ENCODE measurements at regions of chr16 and their contacts with region 1.

Region 1: DNA sequence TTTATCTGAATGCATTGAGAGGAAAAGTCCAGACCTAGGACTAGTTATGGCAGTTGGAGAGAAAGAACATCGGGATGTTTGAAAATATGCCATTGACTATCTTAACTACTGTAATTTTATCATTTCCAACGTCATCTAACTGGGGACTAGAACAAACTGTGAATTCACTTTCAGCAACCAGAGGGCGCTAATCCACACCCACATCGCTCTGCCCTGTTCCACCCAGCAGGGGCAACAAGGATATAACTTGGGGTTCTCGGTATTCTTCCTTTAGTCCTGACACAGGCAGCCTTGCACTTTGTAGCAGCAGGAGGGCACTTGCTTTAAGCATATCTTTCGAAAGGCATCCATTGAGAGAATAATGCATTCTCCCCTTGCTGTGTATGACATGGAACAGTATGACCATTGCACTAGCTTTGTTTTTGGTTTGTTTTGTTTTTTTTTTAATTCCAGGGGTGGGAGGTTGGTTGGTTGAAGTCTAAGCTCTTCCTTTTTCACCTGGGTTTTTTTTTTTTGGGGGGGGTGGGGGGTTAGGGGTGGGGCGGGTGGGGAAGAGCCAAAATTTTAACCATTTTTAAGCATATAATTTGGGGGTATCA is 31.5 kb downstream of the SIAH1 start:
- DNase-seq: peak; percentile 84
- ATAC-seq: peak; percentile 94
- H3K4me3 ChIP-seq: no peak overlapping the region
- H3K4me3 Mint-ChIP-seq: no peak overlapping the region
- H3K27ac ChIP-seq: no peak overlapping the region
- H3K27ac Mint-ChIP-seq: peak overlapping the region; percentile 57
- H3K4me1 ChIP-seq: peaks cover 4 to 5% of the 10 kb centered on the region in 2 donors
- H3K4me1 Mint-ChIP-seq: peaks cover 28% of the 10 kb centered on the region
- H3K27me3 ChIP-seq: no peaks in the 10 kb centered on the region
- H3K27me3 Mint-ChIP-seq: no peaks in the 10 kb centered on the region
- CTCF ChIP-seq: peak; percentile 85

Region 2: DNA sequence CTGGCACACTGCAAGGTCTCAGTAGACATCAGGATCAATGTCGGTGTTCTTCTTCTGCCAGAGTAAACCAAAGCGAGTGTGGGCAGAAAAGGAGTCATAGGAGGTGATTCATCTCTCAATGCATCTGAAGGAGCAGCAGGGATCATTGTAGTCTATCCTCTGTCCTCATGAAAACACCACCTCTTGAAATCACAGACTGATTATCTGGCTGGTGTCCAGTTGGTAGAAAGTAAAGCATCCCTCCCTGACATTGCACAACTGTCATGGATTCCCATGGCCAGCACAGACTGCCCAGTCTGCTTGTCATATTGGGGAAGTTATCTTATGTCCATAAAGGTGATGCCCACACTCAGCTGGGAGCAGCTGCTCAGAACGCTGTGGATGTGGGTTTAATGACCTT is 272.0 kb before region 1 on chr16:
- CTCF ChIA-PET with region 1: no interaction called
- POLR2A ChIA-PET with region 1: no interaction called
- intact Hi-C with region 1: no loop called
- DNase-seq: no peak
- ATAC-seq: no peak
- H3K4me3 ChIP-seq: no peak overlapping the region
- H3K4me3 Mint-ChIP-seq: no peak overlapping the region
- H3K27ac ChIP-seq: no peak overlapping the region
- H3K27ac Mint-ChIP-seq: no peak overlapping the region
- H3K4me1 ChIP-seq: no peaks in the 10 kb centered on the region
- H3K4me1 Mint-ChIP-seq: no peaks in the 10 kb centered on the region
- H3K27me3 ChIP-seq: peaks cover 0 to 6% (median 0%) of the 10 kb centered on the region in 4 experiments
- H3K27me3 Mint-ChIP-seq: peaks cover 29% of the 10 kb centered on the region
- CTCF ChIP-seq: no peak

Region 3: GRCh38 chr16:48335951-48336350 is 17.7 kb before region 1 on chr16:
- CTCF ChIA-PET with region 1: interaction called, 4 read pairs
- POLR2A ChIA-PET with region 1: interaction called, 11 read pairs
- intact Hi-C with region 1: no loop called
- DNase-seq: no peak
- ATAC-seq: no peak
- H3K4me3 ChIP-seq: no peak overlapping the region
- H3K4me3 Mint-ChIP-seq: no peak overlapping the region
- H3K27ac ChIP-seq: no peak overlapping the region
- H3K27ac Mint-ChIP-seq: no peak overlapping the region
- H3K4me1 ChIP-seq: no peaks in the 10 kb centered on the region
- H3K4me1 Mint-ChIP-seq: no peaks in the 10 kb centered on the region
- H3K27me3 ChIP-seq: no peaks in the 10 kb centered on the region
- H3K27me3 Mint-ChIP-seq: no peaks in the 10 kb centered on the region
- CTCF ChIP-seq: no peak

Region 4: GRCh38 chr16:48385272-48386150 is 31.8 kb after region 1 on chr16 and contains the start of gene SIAH1:
- CTCF ChIA-PET with region 1: interaction called, 6 read pairs
- POLR2A ChIA-PET with region 1: interaction called, 3 read pairs
- intact Hi-C with region 1: loop called (anchors 1 kb)
- DNase-seq: peak; percentile 94
- ATAC-seq: peak; percentile 81
- H3K4me3 ChIP-seq: peak within 1 kb of the TSS; percentile 66 to 95 (median 93)
- H3K4me3 Mint-ChIP-seq: peak within 1 kb of the TSS; percentile 93
- H3K27ac ChIP-seq: peak within 1 kb of the TSS; percentile 69 to 88
- H3K27ac Mint-ChIP-seq: peak within 1 kb of the TSS; percentile 92
- H3K4me1 ChIP-seq: peaks cover 17 to 23% of the 10 kb centered on the region in 2 donors
- H3K4me1 Mint-ChIP-seq: peaks cover 25% of the 10 kb centered on the region
- H3K27me3 ChIP-seq: no peaks in the 10 kb centered on the region
- H3K27me3 Mint-ChIP-seq: no peaks in the 10 kb centered on the region
- CTCF ChIP-seq: no peak
- total RNA-seq, gene SIAH1: 47.6 and 54.7 TPM in 2 replicates

Region 5: GRCh38 chr16:48526058-48526957 is 172.6 kb after region 1 on chr16:
- CTCF ChIA-PET with region 1: interaction called, 144 read pairs
- POLR2A ChIA-PET with region 1: interaction called, 8 read pairs
- intact Hi-C with region 1: loop called (anchors 1 kb)
- DNase-seq: peak; percentile 61
- ATAC-seq: peak; percentile 80
- H3K4me3 ChIP-seq: no peak overlapping the region
- H3K4me3 Mint-ChIP-seq: no peak overlapping the region
- H3K27ac ChIP-seq: no peak overlapping the region
- H3K27ac Mint-ChIP-seq: peak overlapping the region; percentile 26
- H3K4me1 ChIP-seq: peaks cover 0 to 13% of the 10 kb centered on the region in 2 donors
- H3K4me1 Mint-ChIP-seq: peaks cover 18% of the 10 kb centered on the region
- H3K27me3 ChIP-seq: no peaks in the 10 kb centered on the region
- H3K27me3 Mint-ChIP-seq: no peaks in the 10 kb centered on the region
- CTCF ChIP-seq: peak; percentile 38

Region 6: GRCh38 chr16:48623304-48624016 is 269.8 kb after region 1 on chr16:
- CTCF ChIA-PET with region 1: interaction called, 73 read pairs
- POLR2A ChIA-PET with region 1: interaction called, 20 read pairs
- intact Hi-C with region 1: loop called (anchors 1 kb)
- DNase-seq: peak; percentile 83
- ATAC-seq: peak; percentile 98
- H3K4me3 ChIP-seq: peak overlapping the region; percentile 39 to 62 (median 59)
- H3K4me3 Mint-ChIP-seq: peak overlapping the region; percentile 85
- H3K27ac ChIP-seq: no peak overlapping the region
- H3K27ac Mint-ChIP-seq: no peak overlapping the region
- H3K4me1 ChIP-seq: peaks cover 14 to 28% of the 10 kb centered on the region in 2 donors
- H3K4me1 Mint-ChIP-seq: peaks cover 22% of the 10 kb centered on the region
- H3K27me3 ChIP-seq: peaks cover 0 to 3% (median 0%) of the 10 kb centered on the region in 4 experiments
- H3K27me3 Mint-ChIP-seq: peaks cover 4% of the 10 kb centered on the region
- CTCF ChIP-seq: peak; percentile 100

Measured in B cell (primary cell).